MCF 10A (cell line): ENCODE measurements at regions of chr3 and their contacts with region 1.

Region 1: DNA sequence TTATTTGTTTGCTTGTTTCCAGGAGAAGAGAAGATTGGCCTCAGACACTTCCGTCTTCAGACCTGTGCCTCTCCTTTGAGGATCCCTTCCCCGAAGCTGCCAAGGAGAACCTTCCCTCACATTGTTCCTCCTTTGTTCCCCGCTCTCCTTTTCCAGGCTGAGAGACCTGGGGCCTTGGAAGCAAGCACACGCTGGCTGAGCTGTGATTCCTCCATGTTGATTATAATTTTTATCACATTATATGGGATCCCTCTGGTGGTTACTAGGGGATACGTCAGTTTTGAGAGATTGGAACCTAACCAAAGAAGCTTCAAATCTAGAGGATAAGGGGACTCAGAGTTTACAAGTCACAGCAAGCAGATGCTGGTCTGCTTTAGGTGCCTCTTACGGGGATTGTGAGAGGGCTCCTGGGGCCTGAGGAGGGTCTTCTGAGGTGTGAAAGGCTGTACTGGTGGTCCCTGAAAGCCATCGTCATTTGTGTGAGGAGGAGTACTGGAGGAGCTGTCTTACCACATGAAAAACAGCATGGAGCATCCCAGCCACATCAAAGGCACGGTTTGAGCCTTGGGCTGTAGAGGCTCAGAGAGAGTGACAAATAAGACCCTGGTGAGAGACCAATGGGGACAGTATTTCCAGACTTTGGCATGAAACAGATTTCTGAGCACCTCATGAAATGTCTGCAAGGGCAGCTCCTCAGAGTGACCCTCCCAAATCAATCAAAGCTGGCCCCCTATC is 760.1 kb upstream of the CFAP20DC start:
- DNase-seq: peak; percentile 33
- H3K4me3 Mint-ChIP-seq: no peak overlapping the region
- H3K27ac Mint-ChIP-seq: peak overlapping the region; percentile 63
- H3K4me1 Mint-ChIP-seq: no peaks in the 10 kb centered on the region
- H3K27me3 Mint-ChIP-seq: no peaks in the 10 kb centered on the region
- CTCF ChIP-seq: peak; percentile 45

Region 2: DNA sequence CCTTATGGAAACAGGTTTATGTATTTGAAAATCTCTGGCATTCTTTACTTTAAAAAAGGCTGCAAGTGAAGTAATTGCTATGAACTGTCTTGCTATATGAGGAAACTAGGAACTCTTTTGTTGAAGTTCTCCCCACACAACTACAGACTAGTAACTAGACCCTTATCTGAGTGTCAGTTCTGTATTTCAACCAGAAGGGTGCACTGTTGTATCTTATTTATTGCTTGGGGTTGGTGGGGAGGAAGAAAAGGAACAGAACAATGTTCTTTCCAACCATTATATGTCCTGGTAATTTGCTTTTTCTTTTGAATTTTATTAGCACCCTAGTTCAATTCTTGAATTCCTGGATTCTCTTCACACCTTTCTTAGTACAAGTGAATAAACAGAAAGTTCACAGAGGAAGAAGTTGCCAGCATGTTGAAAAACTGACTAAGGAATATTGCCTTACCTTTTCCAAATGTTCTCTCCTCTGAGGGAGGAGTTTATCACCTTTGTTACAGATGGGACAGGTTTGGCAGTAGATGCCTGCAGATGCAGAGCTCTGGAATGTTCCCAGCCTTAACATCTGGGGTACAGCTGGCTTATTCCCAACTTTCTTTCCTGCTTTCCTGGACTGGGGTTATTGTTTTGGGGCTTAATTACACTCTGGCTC is 597.6 kb before region 1 on chr3:
- CTCF ChIA-PET with region 1: interaction called, 21 read pairs
- POLR2A ChIA-PET with region 1: interaction called, 4 read pairs
- intact Hi-C with region 1: loop called (anchors 1 kb)
- DNase-seq: peak; percentile 50
- H3K4me3 Mint-ChIP-seq: no peak overlapping the region
- H3K27ac Mint-ChIP-seq: no peak overlapping the region
- H3K4me1 Mint-ChIP-seq: peaks cover 5% of the 10 kb centered on the region
- H3K27me3 Mint-ChIP-seq: no peaks in the 10 kb centered on the region
- CTCF ChIP-seq: peak; percentile 70

Region 3: GRCh38 chr3:59313365-59313764 is 496.5 kb before region 1 on chr3:
- CTCF ChIA-PET with region 1: interaction called, 30 read pairs
- POLR2A ChIA-PET with region 1: interaction called, 5 read pairs
- intact Hi-C with region 1: loop called (anchors 1 kb)
- DNase-seq: peak; percentile 70
- H3K4me3 Mint-ChIP-seq: no peak overlapping the region
- H3K27ac Mint-ChIP-seq: peak overlapping the region; percentile 29
- H3K4me1 Mint-ChIP-seq: peaks cover 5% of the 10 kb centered on the region
- H3K27me3 Mint-ChIP-seq: no peaks in the 10 kb centered on the region
- CTCF ChIP-seq: peak; percentile 86

Region 4: GRCh38 chr3:59580996-59581395 is 228.9 kb before region 1 on chr3:
- CTCF ChIA-PET with region 1: interaction called, 119 read pairs
- POLR2A ChIA-PET with region 1: interaction called, 7 read pairs
- intact Hi-C with region 1: no loop called
- DNase-seq: no peak
- H3K4me3 Mint-ChIP-seq: no peak overlapping the region
- H3K27ac Mint-ChIP-seq: no peak overlapping the region
- H3K4me1 Mint-ChIP-seq: peaks cover 14% of the 10 kb centered on the region
- H3K27me3 Mint-ChIP-seq: no peaks in the 10 kb centered on the region
- CTCF ChIP-seq: no peak

Region 5: DNA sequence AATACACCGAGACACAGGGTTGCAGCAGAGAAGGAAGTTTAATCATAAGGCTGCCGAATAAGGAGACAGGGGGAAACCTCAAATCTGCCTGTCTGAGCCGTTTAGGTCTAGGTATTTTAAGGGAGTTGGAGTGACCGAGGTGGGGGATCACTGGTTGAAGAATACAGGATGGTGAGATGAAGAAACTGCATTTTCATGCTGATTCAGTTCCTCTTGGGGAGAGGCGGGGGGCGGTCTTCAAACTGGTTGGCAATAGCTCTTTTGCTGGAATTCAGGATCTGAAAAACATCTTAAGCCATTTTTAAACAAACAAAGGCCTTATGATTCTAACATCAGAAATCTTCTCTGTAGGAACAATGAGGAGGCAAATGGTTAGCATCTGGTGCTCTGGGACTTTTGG is 60.6 kb before region 1 on chr3:
- CTCF ChIA-PET with region 1: no interaction called
- POLR2A ChIA-PET with region 1: no interaction called
- intact Hi-C with region 1: no loop called
- DNase-seq: no peak
- H3K4me3 Mint-ChIP-seq: no peak overlapping the region
- H3K27ac Mint-ChIP-seq: no peak overlapping the region
- H3K4me1 Mint-ChIP-seq: no peaks in the 10 kb centered on the region
- H3K27me3 Mint-ChIP-seq: no peaks in the 10 kb centered on the region
- CTCF ChIP-seq: no peak